ENCODE measurements at regions of chr3 and their contacts with region 1.

Region 1: DNA sequence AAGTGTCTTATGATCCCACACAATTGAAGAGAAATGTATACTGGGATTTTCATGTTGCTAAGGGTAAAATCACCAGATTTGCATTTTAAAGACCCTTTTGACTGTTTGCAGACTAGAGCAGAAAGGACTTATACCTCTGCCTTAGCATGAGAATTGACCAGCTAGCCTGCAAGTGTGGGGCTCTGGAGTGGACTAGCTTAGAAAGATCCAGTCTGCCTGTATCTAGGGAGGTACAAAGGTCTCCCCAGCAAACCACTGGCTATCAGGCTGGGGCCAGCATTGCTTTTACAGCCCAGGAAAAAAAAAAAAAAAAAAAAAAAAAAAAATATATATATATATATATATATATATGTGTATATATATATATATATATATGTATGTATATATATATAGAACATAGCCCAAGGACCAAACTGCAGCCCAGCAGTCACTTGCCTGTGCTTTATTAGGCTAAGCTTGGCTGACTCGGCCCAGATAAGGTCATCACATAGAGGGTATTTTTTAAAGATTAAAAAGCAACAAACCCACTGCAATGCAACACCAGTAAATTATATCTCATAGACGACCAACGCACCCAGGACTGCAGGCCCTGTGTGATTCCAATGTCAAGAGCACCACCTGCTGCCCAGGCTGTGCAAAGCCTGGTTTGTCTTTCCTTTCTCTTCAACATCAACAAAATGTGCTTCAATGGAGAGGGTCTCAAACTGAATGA is 63.7 kb downstream of the DCLK3 start:
- DNase-seq: peak; percentile 52
- H3K4me3 ChIP-seq: no peak overlapping the region
- H3K27ac ChIP-seq: no peak overlapping the region
- H3K4me1 ChIP-seq: no peaks in the 10 kb centered on the region
- H3K27me3 ChIP-seq: no peaks in the 10 kb centered on the region
- CTCF ChIP-seq: peak; percentile 72 to 76
- POLR2A ChIP-seq: no peak

Region 2: DNA sequence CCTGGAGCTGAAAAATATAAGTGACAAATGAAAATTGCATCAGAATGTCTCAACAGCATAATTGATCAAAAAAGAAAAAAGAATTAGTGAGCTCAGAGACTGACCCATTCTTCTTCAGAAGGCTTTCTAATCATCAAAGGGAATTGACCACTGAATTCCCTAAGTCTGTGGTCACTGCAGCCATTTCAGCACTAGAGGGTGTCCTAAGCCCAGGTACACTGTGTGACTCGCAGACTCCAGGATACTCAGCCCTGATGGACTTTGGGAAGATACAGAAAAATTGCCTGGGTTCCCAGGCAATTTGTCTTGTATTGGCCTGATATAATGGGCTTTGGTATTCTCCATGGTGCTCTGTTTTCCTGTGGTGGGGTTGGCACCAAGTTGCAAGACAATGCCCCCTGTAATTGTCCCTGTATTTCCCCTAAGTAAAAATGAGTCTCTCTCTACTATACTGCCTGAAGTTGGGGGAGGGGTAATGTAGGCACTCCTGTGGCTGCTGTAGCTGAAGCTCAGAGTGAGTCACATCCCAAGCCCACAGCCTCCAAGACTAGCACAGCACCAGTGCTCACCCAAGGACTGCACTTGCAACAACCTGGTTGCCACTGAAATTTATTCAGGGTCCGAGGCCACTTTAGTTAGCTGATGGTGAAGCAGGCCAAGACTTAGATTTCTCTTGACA is 576.4 kb before region 1 on chr3:
- CTCF ChIA-PET with region 1: no interaction called
- POLR2A ChIA-PET with region 1: no interaction called
- dilution Hi-C with region 1: no loop called
- intact Hi-C with region 1: loop called (anchors 1 kb)
- DNase-seq: no peak
- H3K4me3 ChIP-seq: no peak overlapping the region
- H3K27ac ChIP-seq: no peak overlapping the region
- H3K4me1 ChIP-seq: no peaks in the 10 kb centered on the region
- H3K27me3 ChIP-seq: no peaks in the 10 kb centered on the region
- CTCF ChIP-seq: peak; percentile 14 to 15
- POLR2A ChIP-seq: no peak

Region 3: DNA sequence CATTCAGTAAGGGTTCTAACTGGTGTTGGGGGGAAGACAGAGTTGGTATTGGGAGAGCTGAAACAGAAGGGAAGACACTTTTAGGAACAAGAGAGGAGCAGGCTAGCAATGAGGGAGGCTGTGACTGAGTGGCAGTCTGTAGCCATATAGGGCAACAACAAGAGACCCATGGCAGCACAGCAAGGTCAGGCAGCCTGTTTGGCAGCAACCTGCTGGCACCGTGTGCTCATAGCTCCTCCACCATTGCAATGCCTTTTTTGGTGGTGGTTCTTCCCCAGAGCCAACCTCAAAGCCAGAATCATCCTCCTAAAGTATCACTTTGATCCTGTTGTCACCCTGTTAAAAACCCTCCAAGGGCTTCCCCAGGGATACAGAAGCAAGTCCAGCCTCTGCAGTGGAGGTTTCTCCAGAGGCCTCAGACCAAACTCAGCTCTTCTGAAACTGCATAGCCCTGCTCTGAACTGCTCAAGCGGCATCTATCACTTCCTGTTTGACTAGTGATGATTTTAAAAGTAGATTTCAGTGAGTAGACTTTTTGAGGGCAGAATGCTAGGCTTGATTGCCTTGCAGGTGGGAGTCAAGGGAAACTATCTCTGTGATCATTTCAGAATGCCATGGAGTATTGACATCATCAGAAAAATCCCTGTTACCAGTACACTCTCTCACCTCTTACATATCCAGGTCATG is 143.5 kb before region 1 on chr3:
- CTCF ChIA-PET with region 1: no interaction called
- POLR2A ChIA-PET with region 1: no interaction called
- dilution Hi-C with region 1: no loop called
- intact Hi-C with region 1: no loop called
- DNase-seq: no peak
- H3K4me3 ChIP-seq: no peak overlapping the region
- H3K27ac ChIP-seq: no peak overlapping the region
- H3K4me1 ChIP-seq: no peaks in the 10 kb centered on the region
- H3K27me3 ChIP-seq: no peaks in the 10 kb centered on the region
- CTCF ChIP-seq: no peak
- POLR2A ChIP-seq: no peak

Measured in endothelial cell of umbilical vein (primary cell).